Natural killer cell (primary cell): ENCODE measurements at regions of chr17 and their contacts with region 1.

Region 1: GRCh38 chr17:48429638-48430586 is at the start of gene SKAP1:
- DNase-seq: peak; percentile 65 to 83
- ATAC-seq: peak; percentile 59 to 69 (median 67)
- H3K4me3 ChIP-seq: peak within 1 kb of the TSS; percentile 97
- H3K4me3 Mint-ChIP-seq: peak within 1 kb of the TSS; percentile 98
- H3K27ac ChIP-seq: peak within 1 kb of the TSS; percentile 94
- H3K27ac Mint-ChIP-seq: peak within 1 kb of the TSS; percentile 100
- H3K4me1 ChIP-seq: peaks cover 24% of the 10 kb centered on the region
- H3K4me1 Mint-ChIP-seq: peaks cover 67 to 76% of the 10 kb centered on the region in 2 donors
- H3K27me3 ChIP-seq: no peaks in the 10 kb centered on the region
- H3K27me3 Mint-ChIP-seq: peaks cover 0 to 6% of the 10 kb centered on the region in 2 donors
- CTCF ChIP-seq: no peak
- total RNA-seq, gene SKAP1: 168 to 227 (median 190) TPM

Region 2: DNA sequence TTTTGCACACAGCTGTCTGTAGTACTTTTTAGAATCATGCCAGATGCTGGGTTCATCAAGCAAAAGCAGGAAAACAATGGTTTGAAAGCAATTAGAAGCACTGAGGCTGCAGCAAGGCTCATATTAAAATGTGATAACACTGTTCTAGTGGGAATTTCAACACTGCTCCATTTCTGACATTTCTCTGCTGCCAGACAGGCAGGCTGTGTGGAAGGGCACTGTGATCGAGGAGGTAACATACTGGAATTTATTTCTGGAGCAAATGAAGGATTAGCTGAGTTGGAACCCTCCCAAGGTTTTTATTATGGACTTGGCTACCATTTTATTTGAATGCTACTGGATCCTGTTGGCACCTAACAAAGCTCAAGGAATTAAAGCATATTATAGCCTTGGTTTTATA is 66.8 kb before region 1 on chr17:
- intact Hi-C with region 1: no loop called
- DNase-seq: no peak
- ATAC-seq: no peak
- H3K4me3 ChIP-seq: no peak overlapping the region
- H3K4me3 Mint-ChIP-seq: no peak overlapping the region
- H3K27ac ChIP-seq: no peak overlapping the region
- H3K27ac Mint-ChIP-seq: peak overlapping the region in 1 of 2 donors; percentile 25
- H3K4me1 ChIP-seq: peaks cover 3% of the 10 kb centered on the region
- H3K4me1 Mint-ChIP-seq: peaks cover 37 to 49% of the 10 kb centered on the region in 2 donors
- H3K27me3 ChIP-seq: no peaks in the 10 kb centered on the region
- H3K27me3 Mint-ChIP-seq: no peaks in the 10 kb centered on the region
- CTCF ChIP-seq: no peak

Region 3: DNA sequence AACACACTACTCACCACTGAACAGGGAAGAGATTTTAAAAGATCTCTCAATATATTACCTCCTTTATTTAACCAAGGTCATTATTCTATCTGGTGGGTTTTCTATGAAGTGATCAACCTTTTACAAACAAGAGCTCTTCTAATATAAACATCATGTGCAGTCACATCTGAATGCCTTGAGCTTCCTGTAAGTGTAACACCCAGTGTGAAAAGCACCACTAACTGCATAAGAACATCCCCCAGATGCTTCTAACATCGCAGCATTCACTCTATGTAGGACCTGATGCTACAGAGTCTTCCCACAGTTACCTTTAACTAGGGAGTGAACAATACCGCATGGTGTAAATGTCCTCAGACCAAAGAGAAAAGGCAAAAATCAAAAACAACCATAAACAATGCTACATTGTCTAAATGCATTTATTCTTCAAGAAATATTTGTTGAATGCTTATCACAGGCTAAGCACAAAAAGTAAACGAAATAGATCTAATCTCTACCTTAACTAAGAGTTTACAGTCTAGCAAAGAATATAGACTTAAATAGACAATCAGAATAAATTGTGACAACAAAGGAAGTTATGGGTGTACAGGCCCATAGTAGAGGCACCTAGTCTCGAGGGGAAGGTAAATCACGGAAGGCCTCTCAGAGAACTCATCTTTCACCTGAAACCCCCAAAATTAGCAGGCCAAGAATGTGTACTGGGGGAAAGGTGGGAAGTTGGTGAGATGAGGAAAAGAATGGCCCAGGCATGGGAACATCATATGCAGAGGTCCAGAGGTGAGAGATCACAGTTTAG is 16.1 kb before region 1 on chr17:
- intact Hi-C with region 1: loop called (anchors 2 kb)
- DNase-seq: peak in 1 of 2 donors; percentile 57
- ATAC-seq: peak; percentile 83 to 91 (median 90)
- H3K4me3 ChIP-seq: no peak overlapping the region
- H3K4me3 Mint-ChIP-seq: peak overlapping the region; percentile 82
- H3K27ac ChIP-seq: peak overlapping the region; percentile 74
- H3K27ac Mint-ChIP-seq: peak overlapping the region; percentile 87 to 95
- H3K4me1 ChIP-seq: peaks cover 29% of the 10 kb centered on the region
- H3K4me1 Mint-ChIP-seq: peaks cover 60 to 69% of the 10 kb centered on the region in 2 donors
- H3K27me3 ChIP-seq: no peaks in the 10 kb centered on the region
- H3K27me3 Mint-ChIP-seq: no peaks in the 10 kb centered on the region
- CTCF ChIP-seq: no peak

Region 4: DNA sequence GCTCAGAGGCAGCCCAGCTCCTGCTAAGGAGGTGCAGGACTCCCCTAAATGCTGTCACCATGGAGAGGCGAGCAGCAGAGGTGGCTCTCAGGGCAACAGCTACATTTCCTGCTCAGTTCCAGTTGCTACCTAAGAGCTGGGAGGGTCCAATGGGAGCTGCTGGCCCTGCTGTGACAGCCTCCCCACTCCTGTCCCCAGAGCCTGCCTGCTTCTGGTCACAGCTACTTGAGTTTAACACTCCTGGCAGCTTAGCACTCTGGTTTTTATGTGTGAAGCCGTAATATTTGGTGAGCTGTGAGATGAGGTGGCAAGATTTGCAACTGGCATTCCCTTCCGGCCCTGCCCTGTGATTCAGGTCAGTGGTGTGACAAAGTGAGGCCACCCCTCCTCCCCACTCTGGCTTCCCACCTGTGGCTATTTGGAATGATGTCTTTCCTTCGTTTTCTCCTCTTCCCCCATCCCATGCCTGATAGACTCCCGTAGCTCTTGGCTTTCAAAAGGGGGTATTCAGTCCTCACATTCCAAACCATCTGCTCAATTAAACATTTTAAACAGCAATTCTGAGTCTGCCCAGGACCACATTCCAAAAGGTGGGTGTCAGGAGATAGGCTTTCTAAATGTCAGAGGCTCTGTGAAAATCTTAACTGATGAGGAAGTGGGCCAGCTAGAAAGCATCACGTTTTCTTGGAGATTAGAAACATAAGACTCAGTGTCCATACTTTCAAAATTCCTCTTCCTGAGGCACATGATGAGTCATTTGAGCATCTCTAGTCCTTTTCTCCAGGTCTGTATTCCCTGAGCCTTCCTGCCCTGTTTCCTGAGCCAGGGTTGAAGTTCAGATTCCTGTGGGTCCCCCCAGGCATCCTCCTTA is 42.7 kb after region 1 on chr17:
- intact Hi-C with region 1: loop called (anchors 2 kb)
- DNase-seq: peak; percentile 58 to 70
- ATAC-seq: peak; percentile 92 to 96 (median 94)
- H3K4me3 ChIP-seq: no peak overlapping the region
- H3K4me3 Mint-ChIP-seq: peak overlapping the region; percentile 80
- H3K27ac ChIP-seq: peak overlapping the region; percentile 46
- H3K27ac Mint-ChIP-seq: peak overlapping the region; percentile 83 to 93
- H3K4me1 ChIP-seq: peaks cover 39% of the 10 kb centered on the region
- H3K4me1 Mint-ChIP-seq: peaks cover 31 to 57% of the 10 kb centered on the region in 2 donors
- H3K27me3 ChIP-seq: no peaks in the 10 kb centered on the region
- H3K27me3 Mint-ChIP-seq: no peaks in the 10 kb centered on the region
- CTCF ChIP-seq: no peak